ENCODE measurements at regions of chr2 and their contacts with region 1.

Region 1: DNA sequence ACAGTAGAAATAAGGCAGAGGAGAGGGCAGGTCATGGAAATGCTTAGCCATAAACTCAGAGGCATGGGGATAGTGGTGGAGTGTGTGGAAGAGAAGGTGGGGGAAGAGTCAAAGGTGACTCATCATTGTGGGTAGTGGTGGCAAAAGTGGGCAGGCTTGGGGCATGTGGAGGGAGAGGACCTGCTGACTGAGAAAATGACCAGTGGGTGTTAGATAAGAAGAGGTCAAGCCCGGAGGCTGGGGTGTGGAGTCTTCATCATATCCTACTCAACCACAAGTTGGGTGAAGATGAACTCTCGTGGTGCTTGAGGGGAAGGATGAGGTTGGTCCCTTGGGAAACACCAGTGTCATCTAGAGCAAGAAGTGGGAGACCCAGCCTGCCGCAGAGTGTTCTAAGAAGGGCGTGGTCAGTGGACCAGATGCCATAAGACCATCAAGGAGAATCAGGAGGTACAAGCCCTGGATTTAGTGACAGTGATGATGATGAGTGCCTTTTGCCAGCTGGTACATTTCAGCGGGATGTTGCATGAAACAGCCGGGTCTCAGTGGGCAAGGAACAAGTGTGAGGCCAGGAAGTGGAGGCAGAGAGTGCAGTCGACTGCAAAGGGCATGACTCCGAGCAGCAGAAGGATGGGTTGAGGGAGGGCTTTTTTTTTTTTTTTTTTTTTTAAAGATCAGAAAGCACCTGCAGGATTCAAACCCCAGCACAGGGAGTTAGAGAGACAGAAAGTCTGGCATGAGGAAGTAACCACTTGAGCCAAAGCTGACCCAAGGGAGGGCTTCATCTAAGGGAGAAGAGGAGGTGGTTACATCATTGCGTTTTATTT is 122.6 kb upstream of the SPRED2 start:
- DNase-seq: no peak
- H3K4me3 ChIP-seq: no peak overlapping the region
- H3K4me3 Mint-ChIP-seq: no peak overlapping the region
- H3K27ac ChIP-seq: no peak overlapping the region
- H3K27ac Mint-ChIP-seq: peak overlapping the region in 1 of 7 donors; percentile 57
- H3K4me1 ChIP-seq: no peaks in the 10 kb centered on the region
- H3K4me1 Mint-ChIP-seq: peaks cover 4 to 5% (median 4%) of the 10 kb centered on the region in 4 donors
- H3K27me3 ChIP-seq: no peaks in the 10 kb centered on the region
- H3K27me3 Mint-ChIP-seq: peaks cover 6% of the 10 kb centered on the region in 2 donors

Region 2: DNA sequence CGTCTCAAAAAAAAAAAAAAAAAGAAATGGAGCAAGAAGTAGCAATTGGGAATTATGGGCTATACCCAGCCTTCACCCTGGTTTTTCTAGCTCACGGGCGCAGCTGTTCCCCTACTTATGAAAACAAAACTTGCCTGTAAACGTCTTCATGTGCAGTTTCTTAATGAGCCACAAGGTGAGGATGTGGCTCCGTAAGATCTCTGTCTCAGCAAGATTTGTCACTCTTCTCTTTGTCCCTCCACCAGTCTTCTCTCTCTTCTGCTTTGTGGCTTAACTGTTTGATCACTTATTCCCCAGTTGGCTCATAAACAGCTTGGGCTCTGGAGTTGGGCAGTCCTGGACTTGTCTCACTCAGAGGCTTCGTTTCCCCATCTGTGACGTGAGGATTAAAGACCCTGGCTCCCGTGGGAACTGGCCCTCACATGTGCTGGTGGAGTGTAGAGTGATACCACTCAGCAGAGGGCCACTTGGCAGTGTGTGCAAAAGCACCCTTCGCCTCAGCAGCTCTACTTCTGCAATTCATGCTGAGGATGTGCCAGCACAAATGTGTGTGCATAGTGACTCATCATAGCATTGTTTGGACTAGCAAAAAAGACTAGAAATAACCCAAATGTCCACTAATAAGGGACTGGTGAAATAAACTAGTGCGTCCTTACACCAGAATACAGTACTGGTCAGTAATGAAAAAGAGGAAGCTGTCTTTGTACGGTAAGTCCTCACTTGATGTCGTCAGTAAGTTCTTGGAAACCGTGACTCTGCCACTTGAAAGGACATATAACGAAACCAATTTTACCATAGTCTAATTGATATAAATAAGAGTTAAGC is 490.0 kb before region 1 on chr2:
- CTCF ChIA-PET with region 1: no interaction called
- POLR2A ChIA-PET with region 1: no interaction called
- intact Hi-C with region 1: loop called (anchors 5 kb)
- DNase-seq: peak; percentile 55 to 63 (median 57)
- H3K4me3 ChIP-seq: no peak overlapping the region
- H3K4me3 Mint-ChIP-seq: peak overlapping the region in 3 of 8 donors; percentile 29 to 35 (median 31)
- H3K27ac ChIP-seq: no peak overlapping the region
- H3K27ac Mint-ChIP-seq: peak overlapping the region in 6 of 7 donors; percentile 2 to 66 (median 22)
- H3K4me1 ChIP-seq: peaks cover 44% of the 10 kb centered on the region
- H3K4me1 Mint-ChIP-seq: peaks cover 20 to 76% (median 38%) of the 10 kb centered on the region in 4 donors
- H3K27me3 ChIP-seq: no peaks in the 10 kb centered on the region
- H3K27me3 Mint-ChIP-seq: no peaks in the 10 kb centered on the region

Region 3: DNA sequence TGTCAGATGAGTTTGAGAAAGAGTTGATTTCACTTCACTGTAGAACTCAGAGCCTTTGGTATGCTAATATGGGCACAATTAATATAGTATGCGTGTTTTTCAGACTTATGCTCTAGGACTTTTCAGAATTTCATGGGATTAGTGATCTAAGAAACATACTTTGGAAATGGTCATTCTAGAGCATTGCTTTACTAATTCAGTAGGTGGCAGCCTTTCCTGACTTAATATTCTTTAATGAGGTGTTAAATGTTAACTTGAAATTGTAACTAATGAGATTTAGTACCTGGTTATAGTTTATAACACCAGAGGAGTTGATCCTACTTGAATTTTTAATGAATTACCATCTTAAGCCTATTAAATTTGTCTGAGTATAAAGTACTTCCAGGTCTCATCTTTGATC is 298.9 kb before region 1 on chr2:
- CTCF ChIA-PET with region 1: no interaction called
- POLR2A ChIA-PET with region 1: no interaction called
- intact Hi-C with region 1: no loop called
- DNase-seq: no peak
- H3K4me3 ChIP-seq: no peak overlapping the region
- H3K4me3 Mint-ChIP-seq: no peak overlapping the region
- H3K27ac ChIP-seq: no peak overlapping the region
- H3K27ac Mint-ChIP-seq: peak overlapping the region in 1 of 7 donors; percentile 32
- H3K4me1 ChIP-seq: no peaks in the 10 kb centered on the region
- H3K4me1 Mint-ChIP-seq: peaks cover 15 to 32% (median 26%) of the 10 kb centered on the region in 4 donors
- H3K27me3 ChIP-seq: no peaks in the 10 kb centered on the region
- H3K27me3 Mint-ChIP-seq: no peaks in the 10 kb centered on the region

Region 4: DNA sequence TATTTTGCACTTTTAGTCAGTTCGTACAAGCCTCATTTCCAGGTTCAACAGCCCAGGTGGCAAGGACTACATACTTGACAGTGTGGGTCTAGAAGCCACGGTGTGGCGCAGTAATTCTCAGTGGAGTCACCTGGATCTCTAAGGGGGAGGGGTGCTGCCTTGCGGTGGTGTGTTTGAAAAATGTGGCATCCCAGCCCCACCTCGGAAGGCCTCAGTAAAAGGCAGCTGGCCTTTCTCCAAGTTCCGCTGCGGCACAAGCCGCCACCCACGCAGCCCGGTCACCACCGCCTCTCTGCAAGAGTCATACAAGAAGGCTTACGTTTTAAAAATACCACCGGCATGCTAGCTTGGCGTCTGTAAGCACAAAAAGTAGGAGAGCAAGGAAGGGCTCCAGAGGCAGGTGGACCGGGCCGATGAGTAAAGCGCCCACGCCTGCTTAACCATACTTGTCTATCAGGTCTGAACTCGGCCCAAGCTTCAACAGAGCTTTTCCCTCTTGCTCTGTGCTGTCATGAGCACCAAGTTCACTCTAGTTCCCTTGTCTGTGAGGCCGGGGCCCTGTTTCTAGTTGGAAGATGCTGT is 172.1 kb before region 1 on chr2:
- CTCF ChIA-PET with region 1: interaction called, 4 read pairs
- POLR2A ChIA-PET with region 1: no interaction called
- intact Hi-C with region 1: loop called (anchors 1 kb)
- DNase-seq: peak; percentile 69 to 80 (median 73)
- H3K4me3 ChIP-seq: no peak overlapping the region
- H3K4me3 Mint-ChIP-seq: peak overlapping the region; percentile 60 to 87 (median 78)
- H3K27ac ChIP-seq: no peak overlapping the region
- H3K27ac Mint-ChIP-seq: peak overlapping the region; percentile 72 to 87 (median 84)
- H3K4me1 ChIP-seq: peaks cover 23% of the 10 kb centered on the region
- H3K4me1 Mint-ChIP-seq: peaks cover 11 to 40% (median 21%) of the 10 kb centered on the region in 4 donors
- H3K27me3 ChIP-seq: no peaks in the 10 kb centered on the region
- H3K27me3 Mint-ChIP-seq: no peaks in the 10 kb centered on the region

Region 5: DNA sequence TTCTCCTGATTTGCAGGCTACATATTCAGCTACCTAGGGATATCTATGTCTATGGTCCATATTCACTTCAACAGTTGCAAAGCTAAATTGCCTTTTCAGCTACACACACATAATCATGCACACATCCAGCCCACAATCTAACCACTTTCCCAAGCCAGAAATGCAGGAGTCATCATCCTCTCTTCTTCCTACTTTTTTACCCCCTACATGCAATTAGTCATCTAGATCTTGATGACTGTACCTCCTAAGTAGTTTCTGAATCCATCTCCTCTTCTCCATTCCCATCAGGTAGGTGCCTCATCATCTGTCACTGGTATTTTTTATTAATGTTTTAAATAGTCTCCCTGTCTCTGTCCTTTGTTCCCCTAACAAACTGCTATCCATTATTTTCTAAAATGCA is 98.9 kb before region 1 on chr2:
- CTCF ChIA-PET with region 1: no interaction called
- POLR2A ChIA-PET with region 1: no interaction called
- intact Hi-C with region 1: no loop called
- DNase-seq: no peak
- H3K4me3 ChIP-seq: no peak overlapping the region
- H3K4me3 Mint-ChIP-seq: no peak overlapping the region
- H3K27ac ChIP-seq: no peak overlapping the region
- H3K27ac Mint-ChIP-seq: no peak overlapping the region
- H3K4me1 ChIP-seq: no peaks in the 10 kb centered on the region
- H3K4me1 Mint-ChIP-seq: no peaks in the 10 kb centered on the region
- H3K27me3 ChIP-seq: no peaks in the 10 kb centered on the region
- H3K27me3 Mint-ChIP-seq: peaks cover 28 to 33% of the 10 kb centered on the region in 2 donors

Region 6: DNA sequence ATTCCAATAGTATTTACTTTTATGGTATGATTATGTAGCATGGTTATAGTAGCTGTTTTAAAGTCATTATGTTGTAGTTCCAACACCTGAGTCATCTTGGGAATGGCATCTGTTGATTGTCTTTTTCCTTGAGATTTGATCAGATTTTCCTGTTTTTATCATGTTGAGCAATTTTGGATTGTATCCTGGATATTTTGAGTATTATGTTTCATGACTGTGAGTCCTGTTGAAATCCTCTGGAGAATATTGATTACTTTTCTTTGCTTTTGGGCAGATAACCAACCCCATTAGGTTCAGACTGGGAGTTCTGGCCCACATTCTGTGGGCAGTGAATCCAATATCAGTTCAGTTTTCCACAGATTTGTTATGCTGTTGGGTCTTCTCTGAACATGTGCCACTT is 40.7 kb after region 1 on chr2:
- CTCF ChIA-PET with region 1: no interaction called
- POLR2A ChIA-PET with region 1: no interaction called
- intact Hi-C with region 1: no loop called
- DNase-seq: no peak
- H3K4me3 ChIP-seq: no peak overlapping the region
- H3K4me3 Mint-ChIP-seq: no peak overlapping the region
- H3K27ac ChIP-seq: no peak overlapping the region
- H3K27ac Mint-ChIP-seq: no peak overlapping the region
- H3K4me1 ChIP-seq: no peaks in the 10 kb centered on the region
- H3K4me1 Mint-ChIP-seq: no peaks in the 10 kb centered on the region
- H3K27me3 ChIP-seq: no peaks in the 10 kb centered on the region
- H3K27me3 Mint-ChIP-seq: peaks cover 10 to 18% of the 10 kb centered on the region in 2 donors

Measured in CD4-positive, alpha-beta memory T cell (primary cell).